HCT116 (cell line): ENCODE measurements at regions of chr7 and their contacts with region 1.

Region 1: DNA sequence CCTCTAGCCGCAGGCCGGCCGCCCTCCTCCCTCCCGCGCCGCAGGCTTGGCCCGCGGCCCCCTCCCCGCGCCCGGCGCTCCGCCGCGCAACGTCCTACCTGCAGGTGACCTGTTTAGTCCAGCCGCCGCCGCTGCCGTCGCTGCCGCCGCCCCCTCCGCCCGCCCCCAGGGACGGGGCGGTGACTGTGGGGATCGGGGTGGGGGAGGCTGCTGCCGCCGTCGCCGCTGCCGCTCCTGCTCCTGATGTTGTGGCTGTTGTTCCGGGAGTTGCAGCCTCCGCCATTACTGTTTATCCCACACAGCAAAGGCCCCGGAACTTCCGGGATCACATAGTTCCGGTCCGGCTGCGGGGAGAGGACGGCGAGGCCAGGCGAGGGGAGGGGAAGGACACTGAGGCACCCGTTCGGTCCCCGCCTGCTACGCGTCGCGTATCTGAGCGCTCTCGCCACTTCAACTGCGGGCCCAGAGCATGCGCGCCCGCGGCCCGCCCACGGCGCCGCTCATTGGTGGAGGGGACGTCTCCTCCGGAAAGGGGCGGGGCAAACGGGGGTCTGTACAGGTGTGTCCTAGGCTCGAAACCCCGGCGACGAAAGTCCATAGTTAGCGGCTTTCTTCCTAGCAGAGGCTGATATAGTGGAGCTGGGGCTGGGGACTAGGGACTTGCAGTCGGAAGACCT is at the start of gene MKRN1:
- DNase-seq: peak; percentile 92
- ATAC-seq: peak; percentile 96
- H3K4me3 ChIP-seq: peak within 1 kb of the TSS; percentile 91 to 97
- H3K27ac ChIP-seq: peak within 1 kb of the TSS; percentile 84
- H3K4me1 ChIP-seq: peaks cover 8 to 15% of the 10 kb centered on the region in 2 experiments; a peak in 2 of 4 replicates
- H3K27me3 ChIP-seq: no peaks in the 10 kb centered on the region
- CTCF ChIP-seq: no peak
- POLR2A ChIP-seq: no peak
- RAD21 ChIP-seq: no peak
- total RNA-seq, gene MKRN1: 95.0 TPM

Region 2: DNA sequence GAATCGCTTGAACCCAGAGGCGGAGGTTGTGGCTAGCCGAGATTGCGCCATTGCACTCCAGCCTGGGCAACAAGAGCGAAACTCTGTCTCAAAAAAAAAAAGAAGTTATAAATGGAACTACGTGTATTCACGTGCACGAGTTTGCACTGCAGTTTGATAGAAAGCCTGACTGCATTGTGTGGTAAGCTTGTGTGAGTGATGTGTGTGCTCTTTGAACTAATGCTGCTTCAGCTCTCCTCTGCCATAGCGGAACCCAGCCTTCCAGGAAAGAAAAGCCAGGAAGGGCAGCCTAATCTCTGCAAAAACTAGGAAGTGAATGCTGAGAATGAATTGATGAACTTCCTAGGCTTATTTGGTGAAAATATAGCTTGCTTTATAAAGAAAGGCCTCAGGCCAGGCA is 15.7 kb after region 1 on chr7:
- CTCF ChIA-PET with region 1: interaction called, 4 read pairs
- POLR2A ChIA-PET with region 1: no interaction called
- RAD21 ChIA-PET with region 1: interaction called in 1 of 2 experiments, 3 read pairs
- intact Hi-C with region 1: loop called (anchors 2 kb)
- DNase-seq: no peak
- ATAC-seq: no peak
- H3K4me3 ChIP-seq: no peak overlapping the region
- H3K27ac ChIP-seq: no peak overlapping the region
- H3K4me1 ChIP-seq: peaks cover 0 to 4% of the 10 kb centered on the region in 2 experiments; a peak in 1 of 4 replicates
- H3K27me3 ChIP-seq: no peaks in the 10 kb centered on the region
- CTCF ChIP-seq: no peak
- POLR2A ChIP-seq: no peak
- RAD21 ChIP-seq: no peak

Region 3: DNA sequence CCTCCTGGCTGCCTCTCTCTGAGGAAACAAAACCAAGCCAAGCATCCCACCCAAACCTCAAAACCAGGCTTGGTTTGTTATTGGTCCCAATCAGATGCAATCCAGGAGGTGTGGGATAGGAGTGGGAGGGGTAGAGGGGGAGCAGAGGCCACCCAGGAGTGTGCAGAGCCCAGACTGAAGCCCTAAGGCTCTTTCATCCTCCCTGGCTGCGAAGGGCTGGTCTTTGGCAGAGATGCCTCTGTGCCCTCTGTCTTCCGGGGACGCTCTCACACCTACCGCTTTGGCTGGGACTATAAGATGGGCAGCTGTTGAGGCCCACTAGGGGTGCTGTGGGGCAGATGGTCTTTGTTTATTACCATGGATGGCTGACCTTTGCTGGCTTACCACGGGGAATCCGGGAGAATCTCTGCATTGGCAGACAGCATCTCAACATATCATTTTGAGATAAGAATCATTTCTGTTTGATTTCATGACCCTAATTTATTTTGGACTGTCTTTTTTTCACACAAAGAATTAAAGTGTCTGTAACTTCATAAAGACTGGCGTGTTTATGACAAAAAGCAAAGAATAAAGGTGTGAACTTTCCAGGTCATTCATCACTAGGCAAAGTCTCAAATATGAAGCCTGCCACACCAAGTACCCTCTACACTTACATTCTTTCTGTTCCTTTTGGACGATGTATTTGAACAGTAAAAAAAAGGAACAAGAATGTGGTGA is 167.9 kb after region 1 on chr7:
- CTCF ChIA-PET with region 1: no interaction called
- POLR2A ChIA-PET with region 1: no interaction called
- RAD21 ChIA-PET with region 1: no interaction called
- intact Hi-C with region 1: loop called (anchors 2 kb)
- DNase-seq: peak; percentile 50
- ATAC-seq: peak; percentile 96
- H3K4me3 ChIP-seq: no peak overlapping the region
- H3K27ac ChIP-seq: no peak overlapping the region
- H3K4me1 ChIP-seq: peaks cover 2 to 19% of the 10 kb centered on the region in 2 experiments; a peak in 3 of 4 replicates
- H3K27me3 ChIP-seq: no peaks in the 10 kb centered on the region
- CTCF ChIP-seq: peak; percentile 82 to 92 (median 84); a peak in 5 of 6 replicates
- POLR2A ChIP-seq: no peak
- RAD21 ChIP-seq: peak; percentile 59

Region 4: DNA sequence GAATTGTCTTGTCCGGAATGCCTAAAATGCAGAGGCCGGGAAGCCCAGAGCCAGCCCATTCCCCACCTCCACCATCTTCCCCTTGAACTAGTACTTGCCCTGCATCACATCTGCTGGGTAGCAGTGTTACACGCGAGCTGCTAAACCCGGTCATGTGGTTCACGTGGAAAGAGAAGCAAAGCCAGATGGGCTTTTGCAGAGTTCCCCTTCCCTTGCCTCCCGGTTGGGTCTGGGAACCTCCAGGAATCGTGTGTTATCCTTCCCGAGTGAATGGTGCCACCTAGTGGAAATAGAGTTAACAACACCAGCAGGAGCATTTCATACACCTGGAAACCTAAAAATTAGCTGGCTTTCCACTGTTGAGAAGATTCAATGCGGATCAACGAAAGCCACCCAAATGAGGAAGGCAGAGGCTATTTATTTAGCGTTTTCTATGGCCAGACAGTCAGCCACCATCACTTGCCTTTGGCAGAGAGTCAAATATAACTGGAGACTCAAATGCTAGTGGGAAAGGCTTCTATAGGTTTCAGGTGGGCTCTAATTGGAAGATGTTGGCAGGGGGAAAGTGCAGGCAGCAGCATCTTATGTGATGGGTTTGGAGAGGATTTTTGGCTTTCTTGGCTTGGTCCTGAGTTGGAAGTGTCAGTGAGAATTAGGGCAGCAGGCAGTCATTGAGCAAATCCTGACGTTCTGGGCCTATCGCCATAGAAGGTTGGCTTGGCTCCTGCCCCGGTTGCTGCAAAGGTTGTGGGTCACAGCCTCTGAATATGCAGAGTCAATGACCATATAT is 174.3 kb after region 1 on chr7:
- CTCF ChIA-PET with region 1: interaction called, 10 read pairs
- POLR2A ChIA-PET with region 1: no interaction called
- RAD21 ChIA-PET with region 1: no interaction called
- intact Hi-C with region 1: loop called (anchors 2 kb)
- DNase-seq: peak; percentile 65
- ATAC-seq: peak; percentile 94
- H3K4me3 ChIP-seq: no peak overlapping the region
- H3K27ac ChIP-seq: no peak overlapping the region
- H3K4me1 ChIP-seq: peaks cover 0 to 15% of the 10 kb centered on the region in 2 experiments; a peak in 2 of 4 replicates
- H3K27me3 ChIP-seq: no peaks in the 10 kb centered on the region
- CTCF ChIP-seq: peak; percentile 77 to 95 (median 88)
- POLR2A ChIP-seq: no peak
- RAD21 ChIP-seq: peak; percentile 99